Activated naive CD4-positive, alpha-beta T cell treated with anti-CD3 and anti-CD28 coated beads for 36 hours (primary cell): ENCODE measurements at regions of chr19 and their contacts with region 1.

Region 1: GRCh38 chr19:51660975-51661600 is 14.5 kb upstream of the SIGLEC14 start:
- DNase-seq: peak; percentile 89
- H3K4me3 Mint-ChIP-seq: no peak overlapping the region
- H3K27ac Mint-ChIP-seq: no peak overlapping the region
- H3K4me1 Mint-ChIP-seq: peaks cover 5% of the 10 kb centered on the region
- H3K27me3 Mint-ChIP-seq: peaks cover 19% of the 10 kb centered on the region

Region 2: GRCh38 chr19:51431124-51431523 is 230.0 kb before region 1 on chr19:
- CTCF ChIA-PET with region 1: no interaction called
- intact Hi-C with region 1: no loop called
- DNase-seq: no peak
- H3K4me3 Mint-ChIP-seq: no peak overlapping the region
- H3K27ac Mint-ChIP-seq: no peak overlapping the region
- H3K4me1 Mint-ChIP-seq: no peaks in the 10 kb centered on the region
- H3K27me3 Mint-ChIP-seq: no peaks in the 10 kb centered on the region

Region 3: DNA sequence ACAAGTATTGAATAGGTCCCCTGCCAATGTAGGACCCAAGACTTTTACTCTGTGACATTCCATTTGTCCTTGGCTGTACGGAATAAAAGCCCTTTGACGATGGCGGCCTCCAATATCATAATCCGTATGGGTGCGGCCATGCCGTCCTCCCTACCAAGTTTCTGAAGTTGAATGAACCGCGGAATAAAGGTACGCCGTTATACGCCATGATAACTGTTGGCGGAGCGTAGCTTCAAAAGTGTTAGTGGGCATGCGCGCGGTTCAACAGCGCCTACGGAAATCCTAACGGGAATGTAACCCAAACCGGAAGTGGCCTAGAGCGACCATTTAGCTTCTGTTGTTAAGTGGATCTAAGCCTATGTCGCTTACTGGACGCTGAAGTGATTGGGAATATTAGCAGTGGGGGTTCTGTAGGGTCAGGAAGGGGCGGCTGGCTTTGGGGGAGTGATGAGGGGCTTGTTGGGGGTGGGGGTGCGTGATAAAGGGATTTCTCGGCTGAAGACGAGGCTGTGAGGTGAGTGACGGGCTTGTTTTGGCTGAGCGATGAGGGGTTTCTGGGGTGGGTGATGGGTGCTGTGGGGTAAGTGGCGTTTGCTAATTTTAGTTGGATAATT is 90.0 kb before region 1 on chr19 and contains the start of gene ZNF175:
- CTCF ChIA-PET with region 1: no interaction called
- intact Hi-C with region 1: no loop called
- DNase-seq: peak; percentile 91
- H3K4me3 Mint-ChIP-seq: peak within 1 kb of the TSS; percentile 97
- H3K27ac Mint-ChIP-seq: peak within 1 kb of the TSS; percentile 91
- H3K4me1 Mint-ChIP-seq: peaks cover 23% of the 10 kb centered on the region
- H3K27me3 Mint-ChIP-seq: peaks cover 4% of the 10 kb centered on the region
- total RNA-seq, gene ZNF175: 6.5 to 7.9 TPM

Region 4: DNA sequence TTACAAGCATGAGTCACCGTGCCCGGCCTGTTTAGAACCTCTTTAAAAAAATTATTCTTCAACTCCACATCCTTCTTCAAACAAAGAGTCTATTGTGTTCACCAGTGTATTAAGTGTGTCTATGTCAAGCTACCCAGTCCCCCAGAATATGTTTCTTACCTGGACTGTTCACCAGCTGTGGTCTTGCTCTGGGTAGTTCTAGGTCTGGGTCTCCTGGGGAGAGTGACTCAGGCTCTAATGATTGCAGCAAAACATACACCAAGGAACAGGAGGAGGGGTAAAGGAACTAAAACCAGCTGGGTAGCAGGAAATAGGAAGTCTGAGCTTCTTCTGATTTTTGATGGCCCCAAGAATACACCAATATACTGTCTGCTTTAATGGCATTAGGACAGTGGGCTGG is 90.6 kb after region 1 on chr19 and contains the start of gene FPR1:
- CTCF ChIA-PET with region 1: no interaction called
- intact Hi-C with region 1: no loop called
- DNase-seq: no peak
- H3K4me3 Mint-ChIP-seq: no peak within 1 kb of the TSS
- H3K27ac Mint-ChIP-seq: no peak within 1 kb of the TSS
- H3K4me1 Mint-ChIP-seq: no peaks in the 10 kb centered on the region
- H3K27me3 Mint-ChIP-seq: peaks cover 2% of the 10 kb centered on the region
- total RNA-seq, gene FPR1: not detected

Region 5: GRCh38 chr19:51777570-51778462 is 116.7 kb after region 1 on chr19:
- CTCF ChIA-PET with region 1: interaction called, 18 read pairs
- intact Hi-C with region 1: loop called (anchors 5 kb)
- DNase-seq: peak; percentile 49
- H3K4me3 Mint-ChIP-seq: no peak overlapping the region
- H3K27ac Mint-ChIP-seq: no peak overlapping the region
- H3K4me1 Mint-ChIP-seq: no peaks in the 10 kb centered on the region
- H3K27me3 Mint-ChIP-seq: peaks cover 62% of the 10 kb centered on the region